Activated T-helper 1 cell treated with anti-CD3 and anti-CD28 coated beads, Interleukin-12 subunit alpha, Interleukin-12 subunit beta, Interleukin-2, Interleukin-4 antibody, amounts not matched to agents 30 ng/mL and 10 ng/mL and 1 ng/mL, durations not matched to agents 14 hours and 24 hours and 36 hours (primary cell): ENCODE measurements at regions of chr9 and their contacts with region 1.

Region 1: GRCh38 chr9:136439550-136440408 is at the start of gene INPP5E:
- DNase-seq: peak; percentile 84
- H3K4me3 Mint-ChIP-seq: peak within 1 kb of the TSS; percentile 88
- H3K27ac Mint-ChIP-seq: peak within 1 kb of the TSS; percentile 23
- H3K4me1 Mint-ChIP-seq: peaks cover 18% of the 10 kb centered on the region
- H3K27me3 Mint-ChIP-seq: no peaks in the 10 kb centered on the region
- total RNA-seq, gene INPP5E: 19.7 and 20.0 TPM in 2 replicates

Region 2: GRCh38 chr9:136242908-136243525 is 196.8 kb before region 1 on chr9:
- intact Hi-C with region 1: no loop called
- DNase-seq: no peak
- H3K4me3 Mint-ChIP-seq: peak overlapping the region; percentile 96
- H3K27ac Mint-ChIP-seq: peak overlapping the region; percentile 13
- H3K4me1 Mint-ChIP-seq: peaks cover 24% of the 10 kb centered on the region
- H3K27me3 Mint-ChIP-seq: no peaks in the 10 kb centered on the region

Region 3: DNA sequence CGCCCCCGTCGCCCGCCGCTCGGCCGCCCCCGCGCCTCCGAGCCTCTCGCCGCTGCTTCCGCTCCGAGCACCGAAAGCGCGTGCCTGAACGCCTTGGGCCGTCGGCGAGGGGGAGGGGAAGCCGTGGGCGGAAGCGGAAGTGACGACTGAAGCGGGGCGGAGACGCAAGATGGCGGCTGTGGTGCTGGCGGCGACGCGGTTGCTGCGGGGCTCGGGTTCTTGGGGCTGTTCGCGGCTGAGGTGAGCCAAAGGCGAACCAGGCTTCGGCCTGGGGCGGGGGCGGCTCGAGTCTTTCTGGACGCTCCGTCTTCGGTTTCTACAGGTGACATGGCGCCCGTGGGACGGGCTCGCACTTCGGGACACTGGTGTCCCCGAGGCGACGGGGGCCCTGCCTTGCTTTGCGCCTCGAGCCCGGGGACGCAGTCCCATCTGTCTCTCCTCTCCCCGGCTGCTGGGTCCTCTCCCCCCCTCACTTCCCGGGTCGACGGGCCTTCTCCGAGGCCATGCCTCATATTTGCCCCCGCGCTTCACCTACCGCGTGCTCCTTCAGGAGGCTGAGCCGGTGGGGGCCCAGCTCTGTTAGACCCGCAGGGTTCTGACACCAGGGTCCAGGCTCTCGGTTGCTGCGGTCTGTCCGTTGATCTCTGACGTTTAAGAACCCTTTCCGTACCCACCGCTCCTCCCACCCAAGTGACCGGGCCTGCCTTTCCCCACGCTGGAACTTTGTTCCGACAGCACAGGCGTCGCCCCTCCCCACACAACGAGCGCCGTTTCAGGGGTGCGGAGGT is 29.1 kb before region 1 on chr9 and contains the starts of genes ENTR1 and PMPCA:
- intact Hi-C with region 1: loop called (anchors 1 kb)
- DNase-seq: peak; percentile 93
- H3K4me3 Mint-ChIP-seq: peak within 1 kb of the TSS; percentile 97
- H3K27ac Mint-ChIP-seq: peak within 1 kb of the TSS; percentile 94
- H3K4me1 Mint-ChIP-seq: peaks cover 35% of the 10 kb centered on the region
- H3K27me3 Mint-ChIP-seq: peaks cover 3% of the 10 kb centered on the region
- total RNA-seq, gene ENTR1: 50.0 and 54.5 TPM in 2 replicates
- total RNA-seq, gene PMPCA: 104 and 114 TPM in 2 replicates